ENCODE measurements at regions of chr14 and their contacts with region 1.

Region 1: GRCh38 chr14:68248481-68249255 is 429.1 kb downstream of the RAD51B start:
- DNase-seq: peak in 4 of 5 donors; percentile 29 to 60 (median 54)
- H3K4me3 ChIP-seq: no peak overlapping the region
- H3K27ac ChIP-seq: peak overlapping the region; percentile 27 to 86
- H3K4me1 ChIP-seq: peaks cover 36% of the 10 kb centered on the region
- H3K27me3 ChIP-seq: no peaks in the 10 kb centered on the region
- CTCF ChIP-seq: peak in 2 of 3 donors; percentile 68 to 76
- EP300 ChIP-seq: no peak
- POLR2A ChIP-seq: no peak

Region 2: DNA sequence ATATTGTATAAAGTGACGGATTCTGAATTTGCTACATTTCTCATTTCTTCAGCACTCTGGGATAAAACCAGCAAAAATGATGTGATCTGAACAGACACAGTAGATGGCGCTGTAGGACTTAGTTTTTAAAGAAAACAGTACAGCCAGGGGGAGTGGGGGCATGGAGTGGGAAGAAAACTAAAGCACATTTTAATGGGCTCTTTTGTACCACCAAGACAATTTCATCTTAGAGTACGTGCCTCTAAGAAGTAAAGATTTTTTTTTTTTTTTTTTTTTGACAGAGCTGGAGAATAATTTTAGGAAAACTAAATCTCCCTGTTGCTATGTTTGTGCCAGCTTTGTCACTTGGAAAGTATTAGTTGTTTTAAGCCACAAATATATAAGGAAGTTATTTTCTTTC is 304.7 kb before region 1 on chr14:
- intact Hi-C with region 1: loop called in 3 of 4 experiments (anchors 10 kb)
- DNase-seq: peak; percentile 62 to 91 (median 80)
- H3K4me3 ChIP-seq: no peak overlapping the region
- H3K27ac ChIP-seq: peak overlapping the region in 1 of 2 donors; percentile 49
- H3K4me1 ChIP-seq: peaks cover 14% of the 10 kb centered on the region
- H3K27me3 ChIP-seq: no peaks in the 10 kb centered on the region
- CTCF ChIP-seq: peak; percentile 69 to 94 (median 94)
- EP300 ChIP-seq: no peak
- POLR2A ChIP-seq: no peak

Region 3: GRCh38 chr14:68520637-68521556 is 272.2 kb after region 1 on chr14:
- intact Hi-C with region 1: loop called in 1 of 4 experiments (anchors 10 kb)
- DNase-seq: no peak
- H3K4me3 ChIP-seq: no peak overlapping the region
- H3K27ac ChIP-seq: peak overlapping the region; percentile 74 to 75
- H3K4me1 ChIP-seq: peaks cover 49% of the 10 kb centered on the region
- H3K27me3 ChIP-seq: no peaks in the 10 kb centered on the region
- CTCF ChIP-seq: no peak
- EP300 ChIP-seq: no peak
- POLR2A ChIP-seq: no peak

Region 4: GRCh38 chr14:68655911-68656360 is 407.3 kb after region 1 on chr14:
- intact Hi-C with region 1: loop called in 1 of 4 experiments (anchors 5 kb)
- DNase-seq: peak in 2 of 5 donors; percentile 24 to 28
- H3K4me3 ChIP-seq: no peak overlapping the region
- H3K27ac ChIP-seq: peak overlapping the region; percentile 44 to 80
- H3K4me1 ChIP-seq: peaks cover 60% of the 10 kb centered on the region
- H3K27me3 ChIP-seq: no peaks in the 10 kb centered on the region
- CTCF ChIP-seq: peak in 1 of 3 donors; percentile 21
- EP300 ChIP-seq: no peak
- POLR2A ChIP-seq: no peak

Region 5: GRCh38 chr14:68795597-68796417 is 547.1 kb after region 1 on chr14:
- intact Hi-C with region 1: loop called in 2 of 4 experiments (anchors 2 to 5 kb)
- DNase-seq: peak; percentile 82 to 90 (median 87)
- H3K4me3 ChIP-seq: peak overlapping the region; percentile 85
- H3K27ac ChIP-seq: peak overlapping the region; percentile 98 to 100
- H3K4me1 ChIP-seq: peaks cover 5% of the 10 kb centered on the region
- H3K27me3 ChIP-seq: no peaks in the 10 kb centered on the region
- CTCF ChIP-seq: peak; percentile 88 to 99 (median 98)
- EP300 ChIP-seq: peak; percentile 8
- POLR2A ChIP-seq: peak; percentile 71